ENCODE measurements at regions of chr5 and their contacts with region 1.

Region 1: GRCh38 chr5:21831145-21831787 is 1021.9 kb downstream of the CDH12 start:
- DNase-seq: no peak
- H3K4me3 Mint-ChIP-seq: no peak overlapping the region
- H3K27ac Mint-ChIP-seq: no peak overlapping the region
- H3K4me1 Mint-ChIP-seq: no peaks in the 10 kb centered on the region
- H3K27me3 Mint-ChIP-seq: no peaks in the 10 kb centered on the region

Region 2: DNA sequence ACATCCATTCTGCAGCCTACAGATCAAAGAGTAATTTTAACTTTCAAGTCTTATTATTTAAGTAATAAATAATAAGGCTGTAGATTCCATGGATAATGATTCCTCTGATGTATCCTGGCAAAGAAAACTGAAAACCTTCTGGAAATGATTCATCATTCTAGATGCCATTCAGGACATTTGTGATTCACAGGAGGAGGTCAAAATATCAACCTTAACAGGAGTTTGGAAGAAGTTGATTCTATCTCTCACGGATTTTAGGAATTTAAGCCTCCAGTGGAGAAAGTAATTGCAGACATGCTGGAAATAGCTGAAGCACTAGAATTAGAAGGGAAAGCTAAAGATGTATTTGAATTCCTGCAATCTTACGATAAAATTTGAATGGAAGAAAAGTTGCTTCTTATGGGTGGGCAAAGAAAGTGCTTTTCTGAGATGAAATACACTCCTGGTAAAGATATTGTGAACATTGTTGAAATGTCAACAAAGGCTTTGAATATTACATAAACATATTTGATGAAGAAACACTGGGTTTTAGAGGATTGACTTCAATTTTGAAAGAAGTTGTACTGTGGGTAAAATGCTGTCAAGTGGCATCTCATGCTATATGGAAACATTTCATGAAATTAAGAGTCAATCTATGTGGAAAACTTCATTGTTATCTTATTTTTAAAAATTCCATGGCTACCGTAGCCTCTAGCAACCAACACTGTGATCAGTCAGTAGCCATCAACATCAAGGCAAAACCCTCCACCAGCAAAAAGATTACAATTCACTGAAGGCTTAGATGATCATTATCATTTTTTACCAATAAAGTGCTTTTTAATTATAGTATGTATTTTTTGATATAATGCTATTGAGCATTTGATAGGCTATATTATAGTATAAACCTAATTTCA is 119.2 kb before region 1 on chr5:
- intact Hi-C with region 1: loop called (anchors 10 kb)
- DNase-seq: no peak
- H3K4me3 Mint-ChIP-seq: no peak overlapping the region
- H3K27ac Mint-ChIP-seq: no peak overlapping the region
- H3K4me1 Mint-ChIP-seq: no peaks in the 10 kb centered on the region
- H3K27me3 Mint-ChIP-seq: no peaks in the 10 kb centered on the region

Measured in activated T-helper 2 cell treated with anti-CD3 and anti-CD28 coated beads, Interferon-gamma antibody, Interleukin-2, Interleukin-4, amounts not matched to agents 10 μg/mL and 5 μg/mL and 100 μg/mL, durations not matched to agents 14 hours and 24 hours and 36 hours (primary cell).